Activated naive CD4-positive, alpha-beta T cell treated with anti-CD3 and anti-CD28 coated beads for 36 hours (primary cell): ENCODE measurements at regions of chr21 and their contacts with region 1.

Region 1: DNA sequence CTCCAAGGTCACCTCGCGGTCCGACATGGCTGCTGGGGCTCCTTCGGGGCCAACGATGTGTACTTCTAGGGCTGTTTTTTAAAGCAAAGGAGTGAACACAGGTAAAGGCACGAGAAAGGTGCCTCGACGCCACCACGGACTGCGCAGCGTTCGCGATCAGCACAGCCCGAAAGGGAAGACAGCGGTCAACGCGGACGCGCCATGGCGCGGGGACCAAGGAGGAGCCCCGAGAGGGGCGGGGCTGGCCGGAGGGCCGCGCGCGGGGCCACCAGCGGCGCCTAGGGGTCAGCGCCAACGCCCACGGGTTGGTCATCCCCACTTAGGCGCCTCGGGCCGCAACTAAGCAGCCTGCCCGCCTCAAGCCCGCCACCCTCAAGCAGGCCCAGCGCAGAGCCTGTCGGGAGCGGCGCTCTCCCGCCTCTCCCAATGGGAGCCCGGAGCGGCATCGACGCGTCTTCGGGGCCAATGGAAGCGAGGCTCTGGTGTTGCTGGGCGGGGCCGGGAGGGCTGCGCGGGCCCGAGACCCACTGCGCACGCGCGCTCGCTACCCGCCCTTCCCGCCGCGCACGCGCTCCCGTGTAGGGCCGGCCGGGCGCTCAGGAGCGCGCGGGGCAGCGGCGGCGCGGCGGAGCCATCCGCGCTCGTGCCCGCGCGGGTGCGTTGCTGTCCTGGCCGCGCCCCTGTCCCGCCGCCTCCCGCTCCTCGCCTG is at the start of gene DIP2A:
- DNase-seq: peak; percentile 94
- H3K4me3 Mint-ChIP-seq: peak within 1 kb of the TSS; percentile 83
- H3K27ac Mint-ChIP-seq: peak within 1 kb of the TSS; percentile 86
- H3K4me1 Mint-ChIP-seq: peaks cover 36% of the 10 kb centered on the region
- H3K27me3 Mint-ChIP-seq: no peaks in the 10 kb centered on the region
- total RNA-seq, gene DIP2A: 31.4 to 32.7 TPM

Region 2: GRCh38 chr21:46285761-46286496 is 172.5 kb before region 1 on chr21 and contains the start of gene YBEY:
- CTCF ChIA-PET with region 1: no interaction called
- intact Hi-C with region 1: loop called (anchors 2 kb)
- DNase-seq: peak; percentile 89
- H3K4me3 Mint-ChIP-seq: peak within 1 kb of the TSS; percentile 98
- H3K27ac Mint-ChIP-seq: peak within 1 kb of the TSS; percentile 96
- H3K4me1 Mint-ChIP-seq: peaks cover 59% of the 10 kb centered on the region
- H3K27me3 Mint-ChIP-seq: no peaks in the 10 kb centered on the region
- total RNA-seq, gene YBEY: 9.9 to 11.0 TPM

Region 3: DNA sequence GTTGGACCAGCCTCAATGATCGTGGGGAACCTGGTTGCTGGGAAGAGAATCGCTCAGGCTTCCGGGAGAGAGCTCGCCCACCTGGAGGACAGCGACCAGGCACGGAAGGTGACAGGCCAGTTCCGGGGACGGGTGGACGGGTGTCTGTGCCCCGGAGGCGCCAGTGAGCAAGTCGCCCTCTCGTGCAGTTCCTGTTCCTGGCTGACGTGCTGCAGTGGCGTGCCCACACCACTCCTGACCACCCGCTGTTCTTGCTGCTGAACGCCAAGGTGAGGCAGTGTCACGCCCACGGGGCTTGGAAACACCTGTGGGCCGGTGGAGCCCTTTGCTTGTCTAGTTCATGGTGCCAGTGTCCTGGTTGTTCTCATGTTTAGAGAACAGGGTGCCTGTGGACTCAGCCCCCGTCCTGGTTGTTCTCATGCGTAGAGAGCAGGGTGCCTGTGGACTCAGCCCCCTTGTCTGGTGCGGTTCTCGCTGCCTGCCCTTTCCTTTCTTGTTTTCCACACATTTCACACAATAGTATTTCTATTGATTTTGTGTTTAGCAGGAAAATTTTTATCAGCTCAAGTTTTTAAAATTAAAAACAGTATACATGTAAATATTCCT is 93.3 kb after region 1 on chr21:
- CTCF ChIA-PET with region 1: no interaction called
- intact Hi-C with region 1: loop called (anchors 5 kb)
- DNase-seq: peak; percentile 65
- H3K4me3 Mint-ChIP-seq: peak overlapping the region; percentile 60
- H3K27ac Mint-ChIP-seq: peak overlapping the region; percentile 76
- H3K4me1 Mint-ChIP-seq: peaks cover 41% of the 10 kb centered on the region
- H3K27me3 Mint-ChIP-seq: no peaks in the 10 kb centered on the region